Panc1 (cell line): ENCODE measurements at regions of chr2 and their contacts with region 1.

Region 1: DNA sequence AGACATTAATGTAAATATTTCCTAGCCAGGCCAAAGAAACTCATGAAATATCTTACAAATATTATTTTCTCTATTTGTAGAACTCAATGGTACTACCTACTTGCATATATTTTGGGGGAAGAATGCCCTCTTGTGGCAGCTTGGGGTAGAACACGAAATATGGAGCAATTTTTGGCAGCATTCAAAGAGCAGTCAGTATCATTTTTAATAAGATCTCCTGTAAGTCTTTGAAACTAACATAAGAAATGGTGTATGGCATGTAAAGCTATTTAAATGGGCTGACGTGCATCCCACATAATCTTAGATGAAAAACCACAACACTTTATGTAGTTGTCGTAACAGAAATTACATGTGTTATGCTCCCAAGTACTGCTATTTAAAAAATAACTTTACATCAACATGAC is 62.3 kb upstream of the CCDC195 start:
- DNase-seq: peak; percentile 56
- ATAC-seq: peak; percentile 77; the same call in 1 of the 2 replicates
- H3K4me3 ChIP-seq: no peak overlapping the region
- H3K27ac ChIP-seq: peak overlapping the region; percentile 66; the same call in 1 of the 2 replicates
- H3K4me1 ChIP-seq: peaks cover 20% of the 10 kb centered on the region
- H3K27me3 ChIP-seq: no peaks in the 10 kb centered on the region
- CTCF ChIP-seq: peak; percentile 74; the same call in 1 of the 2 replicates

Region 2: GRCh38 chr2:224072554-224073188 is 705.8 kb before region 1 on chr2:
- CTCF ChIA-PET with region 1: no interaction called
- POLR2A ChIA-PET with region 1: no interaction called
- in situ Hi-C with region 1: no loop called
- intact Hi-C with region 1: no loop called
- DNase-seq: no peak
- ATAC-seq: no peak
- H3K4me3 ChIP-seq: no peak overlapping the region
- H3K27ac ChIP-seq: no peak overlapping the region
- H3K4me1 ChIP-seq: no peaks in the 10 kb centered on the region
- H3K27me3 ChIP-seq: no peaks in the 10 kb centered on the region
- CTCF ChIP-seq: no peak

Region 3: DNA sequence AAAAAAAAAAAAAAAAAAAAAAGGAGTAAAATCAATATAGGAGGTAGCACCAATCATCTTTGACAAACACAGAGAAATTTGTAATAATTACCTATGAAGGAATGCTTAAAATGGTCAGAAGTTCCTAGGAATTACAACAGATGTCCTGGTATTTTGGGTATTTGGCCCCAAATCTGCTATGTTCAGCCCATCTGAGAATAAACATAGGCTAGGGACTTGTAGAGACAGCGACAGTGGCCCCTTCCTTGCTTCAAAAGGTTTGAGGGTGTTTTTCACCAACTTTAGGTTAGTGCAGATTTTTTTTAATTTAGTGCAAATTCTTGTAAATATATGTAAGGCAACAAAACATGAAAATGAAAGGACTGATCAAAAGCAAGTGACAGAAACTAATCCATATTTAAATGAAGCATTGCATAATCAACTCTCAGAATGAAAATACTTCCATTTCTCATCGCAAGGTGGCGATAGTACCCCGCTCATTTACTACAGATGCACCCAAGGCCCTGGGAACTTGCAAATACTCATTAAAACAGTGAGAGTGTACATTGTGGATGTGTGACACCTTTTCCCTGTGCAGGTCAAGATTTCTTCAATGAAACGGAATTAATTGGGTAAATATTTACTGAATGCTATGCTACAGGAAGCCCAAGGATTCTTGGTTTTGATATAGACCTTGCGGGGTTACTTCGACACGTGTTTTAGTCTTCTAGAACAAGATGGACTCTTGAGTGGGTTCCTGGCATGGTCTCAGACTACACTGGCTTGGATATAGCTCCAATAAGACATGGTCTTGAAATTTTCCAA is 421.2 kb before region 1 on chr2:
- CTCF ChIA-PET with region 1: no interaction called
- POLR2A ChIA-PET with region 1: no interaction called
- in situ Hi-C with region 1: no loop called
- intact Hi-C with region 1: loop called (anchors 1 kb)
- DNase-seq: peak; percentile 69
- ATAC-seq: peak; percentile 86
- H3K4me3 ChIP-seq: no peak overlapping the region
- H3K27ac ChIP-seq: no peak overlapping the region
- H3K4me1 ChIP-seq: 0 out of 2 replicates have a peak, but pooled peaks cover 2% of the 10 kb centered on the region
- H3K27me3 ChIP-seq: no peaks in the 10 kb centered on the region
- CTCF ChIP-seq: peak; percentile 78

Region 4: GRCh38 chr2:224585205-224586088 is 193.0 kb before region 1 on chr2 and contains the start of gene CUL3:
- CTCF ChIA-PET with region 1: no interaction called
- POLR2A ChIA-PET with region 1: no interaction called
- in situ Hi-C with region 1: no loop called
- intact Hi-C with region 1: loop called (anchors 5 kb)
- DNase-seq: peak; percentile 88
- ATAC-seq: peak; percentile 96
- H3K4me3 ChIP-seq: peak within 1 kb of the TSS; percentile 95 to 98
- H3K27ac ChIP-seq: peak within 1 kb of the TSS; percentile 95
- H3K4me1 ChIP-seq: peaks cover 11% of the 10 kb centered on the region
- H3K27me3 ChIP-seq: no peaks in the 10 kb centered on the region
- CTCF ChIP-seq: no peak
- total RNA-seq, gene CUL3: 104 TPM

Region 5: GRCh38 chr2:224650815-224651439 is 127.5 kb before region 1 on chr2:
- CTCF ChIA-PET with region 1: no interaction called
- POLR2A ChIA-PET with region 1: interaction called, 4 read pairs
- in situ Hi-C with region 1: no loop called
- intact Hi-C with region 1: loop called (anchors 5 kb)
- DNase-seq: peak; percentile 38
- ATAC-seq: peak; percentile 91
- H3K4me3 ChIP-seq: no peak overlapping the region
- H3K27ac ChIP-seq: peak overlapping the region; percentile 58
- H3K4me1 ChIP-seq: peaks cover 3% of the 10 kb centered on the region
- H3K27me3 ChIP-seq: no peaks in the 10 kb centered on the region
- CTCF ChIP-seq: peak; percentile 78

Region 6: DNA sequence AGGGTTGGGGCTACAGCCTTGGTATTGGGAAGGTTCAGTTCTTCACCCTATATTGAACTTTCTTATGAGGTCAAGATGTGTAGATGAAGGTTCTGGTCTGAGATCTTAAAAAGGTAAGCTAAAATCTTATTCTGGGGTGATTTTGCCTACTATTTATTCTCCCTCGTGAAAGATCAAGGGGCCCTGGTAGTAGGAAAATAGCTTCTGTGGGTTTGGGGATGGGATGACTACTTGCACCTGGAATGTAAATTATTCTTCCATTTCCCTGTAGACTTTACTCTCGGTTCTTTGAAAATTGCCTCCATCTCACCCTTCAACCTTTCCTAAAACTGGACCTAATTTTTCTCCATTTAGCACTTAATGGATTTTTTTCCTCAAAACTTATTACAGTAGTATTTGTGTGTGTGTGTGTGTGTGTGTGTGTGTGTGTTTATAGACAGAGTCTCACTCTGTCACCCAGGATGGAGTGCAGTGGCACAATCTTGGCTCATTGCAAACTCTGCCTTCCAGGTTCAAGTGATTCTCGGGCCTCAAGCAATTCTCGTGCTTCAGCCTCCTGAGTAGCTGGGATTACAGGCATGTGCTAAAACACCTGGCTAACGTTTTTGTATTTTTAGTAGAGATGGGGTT is 99.7 kb before region 1 on chr2:
- CTCF ChIA-PET with region 1: no interaction called
- POLR2A ChIA-PET with region 1: no interaction called
- in situ Hi-C with region 1: no loop called
- intact Hi-C with region 1: loop called (anchors 10 kb)
- DNase-seq: peak; percentile 47
- ATAC-seq: peak; percentile 84
- H3K4me3 ChIP-seq: peak overlapping the region; percentile 12 to 34
- H3K27ac ChIP-seq: peak overlapping the region; percentile 93
- H3K4me1 ChIP-seq: peaks cover 15% of the 10 kb centered on the region
- H3K27me3 ChIP-seq: no peaks in the 10 kb centered on the region
- CTCF ChIP-seq: no peak

Region 7: GRCh38 chr2:225002039-225002655 is 223.7 kb after region 1 on chr2:
- CTCF ChIA-PET with region 1: no interaction called
- POLR2A ChIA-PET with region 1: no interaction called
- in situ Hi-C with region 1: no loop called
- intact Hi-C with region 1: loop called (anchors 10 kb)
- DNase-seq: peak; percentile 41
- ATAC-seq: peak; percentile 84
- H3K4me3 ChIP-seq: no peak overlapping the region
- H3K27ac ChIP-seq: peak overlapping the region; percentile 41; the same call in 1 of the 2 replicates
- H3K4me1 ChIP-seq: peaks cover 4% of the 10 kb centered on the region
- H3K27me3 ChIP-seq: no peaks in the 10 kb centered on the region
- CTCF ChIP-seq: peak; percentile 81